ENCODE measurements at regions of chr17 and their contacts with region 1.

Region 1: DNA sequence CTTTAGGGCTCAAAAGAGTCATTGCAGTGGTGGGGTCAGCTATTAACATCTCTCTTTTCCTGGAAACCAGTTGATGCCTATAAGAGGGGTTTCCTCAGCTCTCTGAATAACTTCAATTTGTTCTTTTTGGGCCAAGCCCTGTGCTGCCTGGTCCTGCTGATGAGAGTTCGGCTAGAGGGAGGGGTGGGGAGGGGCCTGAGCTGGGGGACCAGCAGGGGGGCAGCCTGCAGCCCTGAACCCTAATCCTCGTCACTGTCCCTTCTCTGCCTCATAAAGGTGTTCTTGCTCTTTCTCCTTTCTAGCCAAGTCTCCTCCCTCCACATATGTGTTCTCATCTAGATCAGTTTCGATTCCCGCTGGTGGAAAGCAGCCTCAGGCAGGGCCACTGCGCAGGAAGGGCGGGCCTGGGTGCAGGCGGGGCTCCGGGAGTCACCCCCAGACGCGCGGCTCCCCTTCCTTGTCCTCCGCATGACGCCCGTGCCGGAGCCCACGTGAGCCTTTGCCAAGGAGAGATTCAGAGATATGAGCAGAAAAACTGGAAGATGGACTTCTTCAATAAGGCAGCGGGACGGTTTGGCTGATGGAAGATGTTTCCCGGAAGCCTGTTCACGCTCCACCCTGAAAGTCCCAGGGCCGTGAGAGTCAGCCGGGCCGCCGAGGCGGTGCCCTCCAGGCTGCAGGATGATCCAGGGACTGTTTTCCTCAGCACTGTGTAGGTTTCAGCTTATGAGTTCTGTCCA is 15.0 kb upstream of the RHOT1 start:
- DNase-seq: peak; percentile 62 to 85 (median 75)
- ATAC-seq: peak; percentile 99 to 100 (median 99)
- H3K4me3 ChIP-seq: peak overlapping the region; percentile 62 to 70
- H3K4me3 Mint-ChIP-seq: peak overlapping the region; percentile 93 to 98 (median 93)
- H3K27ac ChIP-seq: peak overlapping the region; percentile 82
- H3K27ac Mint-ChIP-seq: peak overlapping the region; percentile 97 to 98
- H3K4me1 ChIP-seq: peaks cover 7 to 20% of the 10 kb centered on the region in 2 experiments
- H3K4me1 Mint-ChIP-seq: peaks cover 22 to 32% (median 26%) of the 10 kb centered on the region in 3 donors
- H3K27me3 ChIP-seq: no peaks in the 10 kb centered on the region
- H3K27me3 Mint-ChIP-seq: no peaks in the 10 kb centered on the region

Region 2: DNA sequence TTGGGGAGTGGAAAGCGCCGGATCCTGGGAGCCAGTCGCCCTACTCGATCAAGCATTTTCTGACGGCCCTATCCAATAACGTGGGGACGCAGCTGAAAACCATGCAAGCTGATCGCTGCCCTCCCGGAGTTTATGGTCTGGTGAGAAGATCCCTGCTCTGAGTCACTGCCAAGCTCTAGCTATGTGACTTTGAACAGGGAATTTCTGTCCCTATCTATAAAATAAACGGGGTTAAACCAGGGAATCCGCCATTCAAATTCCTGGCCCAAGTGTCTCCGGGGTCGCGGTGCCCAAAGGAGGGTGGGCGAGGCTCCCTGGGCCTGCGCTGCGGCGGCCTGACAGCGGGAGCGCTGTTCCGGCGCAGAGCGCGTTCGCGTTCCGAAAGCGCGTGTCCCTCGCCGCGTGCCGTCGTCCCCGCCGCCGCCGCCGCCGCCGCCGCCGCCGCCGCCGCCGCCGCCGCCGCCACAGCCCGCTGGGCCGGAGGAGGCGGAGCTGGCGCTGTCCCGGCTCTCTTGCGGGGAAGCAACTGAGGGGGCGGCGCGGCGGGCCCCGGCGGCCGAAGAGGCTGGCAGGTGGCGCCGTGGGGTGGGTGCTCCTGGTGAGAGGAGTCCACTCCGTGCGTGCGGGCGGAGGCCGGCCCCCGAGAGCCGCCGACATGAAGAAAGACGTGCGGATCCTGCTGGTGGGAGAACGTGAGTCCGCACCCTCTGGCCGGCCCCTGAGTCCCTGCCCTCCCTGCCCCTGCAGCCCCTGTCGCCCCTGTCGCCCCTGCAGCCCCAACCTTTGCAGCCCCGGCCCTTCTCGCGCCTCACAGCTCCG is 14.9 kb after region 1 on chr17 and contains the start of gene RHOT1:
- CTCF ChIA-PET with region 1: interaction called, 4 to 44 read pairs
- POLR2A ChIA-PET with region 1: interaction called in 1 of 2 experiments, 3 read pairs
- DNase-seq: peak; percentile 37 to 89 (median 68)
- ATAC-seq: peak; percentile 81 to 90 (median 82)
- H3K4me3 ChIP-seq: peak within 1 kb of the TSS; percentile 68 to 95
- H3K4me3 Mint-ChIP-seq: peak within 1 kb of the TSS; percentile 93 to 99 (median 95)
- H3K27ac ChIP-seq: peak within 1 kb of the TSS; percentile 58
- H3K27ac Mint-ChIP-seq: peak within 1 kb of the TSS; percentile 87 to 90
- H3K4me1 ChIP-seq: peaks cover 12 to 31% of the 10 kb centered on the region in 2 experiments
- H3K4me1 Mint-ChIP-seq: peaks cover 23 to 36% (median 31%) of the 10 kb centered on the region in 3 donors
- H3K27me3 ChIP-seq: no peaks in the 10 kb centered on the region
- H3K27me3 Mint-ChIP-seq: no peaks in the 10 kb centered on the region
- total RNA-seq, gene RHOT1: 18.7 to 26.8 (median 24.1) TPM

Region 3: DNA sequence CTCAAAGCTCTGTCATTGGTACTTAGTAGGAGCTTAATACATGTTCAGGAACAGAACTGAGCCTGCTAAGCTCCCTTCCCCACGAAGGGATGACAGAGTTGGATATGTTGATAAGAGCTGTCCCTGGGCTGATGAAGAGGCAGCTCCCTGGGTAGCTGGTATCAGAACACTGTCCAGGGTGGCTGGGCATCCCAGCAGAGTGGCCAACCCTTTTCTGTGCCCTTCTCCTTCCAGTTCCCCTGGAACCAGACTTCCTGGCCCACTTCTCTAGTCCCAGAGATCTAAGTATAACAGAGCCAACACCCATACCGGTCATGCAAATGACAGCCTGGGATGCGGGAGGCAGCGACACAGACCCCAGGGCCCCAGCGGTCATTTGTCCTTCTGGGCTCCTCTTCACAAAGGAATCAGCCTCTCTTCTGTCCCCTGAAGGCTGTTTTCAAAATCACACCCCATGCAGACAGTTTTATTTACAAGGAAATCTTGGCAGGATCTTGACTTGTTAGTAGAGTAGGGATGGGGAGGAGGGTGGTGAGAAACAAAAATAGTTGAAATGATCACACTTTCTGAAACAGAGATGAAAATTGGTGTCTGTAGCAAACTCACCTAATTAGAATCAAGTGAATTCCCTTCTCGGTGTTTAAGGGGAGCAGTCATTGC is 136.9 kb after region 1 on chr17:
- CTCF ChIA-PET with region 1: no interaction called
- POLR2A ChIA-PET with region 1: interaction called in 1 of 2 experiments, 10 read pairs
- DNase-seq: no peak
- ATAC-seq: no peak
- H3K4me3 ChIP-seq: no peak overlapping the region
- H3K4me3 Mint-ChIP-seq: peak overlapping the region; percentile 70 to 80 (median 78)
- H3K27ac ChIP-seq: no peak overlapping the region
- H3K27ac Mint-ChIP-seq: no peak overlapping the region
- H3K4me1 ChIP-seq: peaks cover 0 to 23% of the 10 kb centered on the region in 2 experiments
- H3K4me1 Mint-ChIP-seq: peaks cover 19 to 23% (median 21%) of the 10 kb centered on the region in 3 donors
- H3K27me3 ChIP-seq: peaks cover 24 to 60% of the 10 kb centered on the region in 2 experiments
- H3K27me3 Mint-ChIP-seq: peaks cover 33 to 51% of the 10 kb centered on the region in 2 donors

Region 4: DNA sequence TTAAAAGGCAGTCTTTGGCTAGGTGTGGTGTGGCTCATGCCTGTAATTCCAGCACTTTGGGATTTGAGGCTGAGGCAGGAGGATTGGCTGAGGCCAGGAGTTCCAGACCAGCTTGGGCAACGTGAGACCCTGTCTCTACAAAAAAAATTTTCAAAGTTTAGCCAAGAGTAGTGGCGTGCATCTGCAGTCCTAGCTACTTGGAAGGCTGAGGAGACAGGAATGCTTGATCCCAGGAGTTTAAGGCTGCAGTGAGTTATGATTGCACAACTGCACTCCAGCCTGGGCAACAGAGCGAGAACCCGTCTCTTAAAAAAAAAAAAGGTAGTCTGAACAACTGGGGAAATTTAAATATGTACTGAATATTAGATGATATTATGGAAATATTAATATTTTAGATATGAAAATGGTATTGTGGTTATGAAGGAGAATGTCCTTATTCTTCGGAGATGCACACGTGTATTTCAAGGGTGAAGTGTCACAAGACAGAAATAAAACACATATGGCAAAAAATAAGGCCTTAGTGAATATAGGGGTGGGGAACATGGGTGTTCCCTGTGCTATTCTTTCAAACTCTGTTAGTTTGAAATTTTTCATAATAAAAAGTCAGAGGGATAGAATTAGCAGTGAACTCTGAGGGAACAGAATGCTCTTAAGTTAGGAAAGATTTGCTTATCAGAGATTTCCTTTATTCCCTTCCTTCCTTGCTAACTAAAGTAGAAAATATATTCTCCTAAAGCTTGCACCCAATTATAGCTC is 504.2 kb after region 1 on chr17:
- CTCF ChIA-PET with region 1: no interaction called
- POLR2A ChIA-PET with region 1: no interaction called
- DNase-seq: no peak
- ATAC-seq: no peak
- H3K4me3 ChIP-seq: no peak overlapping the region
- H3K4me3 Mint-ChIP-seq: no peak overlapping the region
- H3K27ac ChIP-seq: no peak overlapping the region
- H3K27ac Mint-ChIP-seq: no peak overlapping the region
- H3K4me1 ChIP-seq: no peaks in the 10 kb centered on the region
- H3K4me1 Mint-ChIP-seq: no peaks in the 10 kb centered on the region
- H3K27me3 ChIP-seq: no peaks in the 10 kb centered on the region
- H3K27me3 Mint-ChIP-seq: no peaks in the 10 kb centered on the region